Adrenal gland (tissue), 19 donors: ENCODE measurements at regions of chr7 and their contacts with region 1.

Region 1: GRCh38 chr7:140136073-140136472 is 40.7 kb downstream of the KDM7A start:
- DNase-seq: no peak
- H3K4me3 ChIP-seq: no peak overlapping the region
- H3K27ac ChIP-seq: no peak overlapping the region
- H3K4me1 ChIP-seq: no peaks in the 10 kb centered on the region
- H3K27me3 ChIP-seq: no peaks in the 10 kb centered on the region
- CTCF ChIP-seq: no peak
- POLR2A ChIP-seq: no peak

Region 2: GRCh38 chr7:140079121-140079536 is 56.9 kb before region 1 on chr7:
- intact Hi-C with region 1: loop called in 1 of 2 experiments (anchors 10 kb)
- DNase-seq: peak in 5 of 7 donors; percentile 50 to 73 (median 67)
- H3K4me3 ChIP-seq: no peak overlapping the region
- H3K27ac ChIP-seq: no peak overlapping the region
- H3K4me1 ChIP-seq: peaks cover 0 to 3% of the 10 kb centered on the region in 2 donors
- H3K27me3 ChIP-seq: no peaks in the 10 kb centered on the region
- CTCF ChIP-seq: peak in 2 of 6 experiments; percentile 15 to 16
- POLR2A ChIP-seq: no peak